Heart right ventricle (tissue), 16 donors: ENCODE measurements at regions of chr4 and their contacts with region 1.

Region 1: GRCh38 chr4:14254252-14254651 is 626.7 kb upstream of the BOD1L1 start:
- DNase-seq: peak; percentile 4 to 6
- ATAC-seq: peak in 1 of 8 donors; percentile 20
- H3K4me3 ChIP-seq: no peak overlapping the region
- H3K27ac ChIP-seq: no peak overlapping the region
- H3K4me1 ChIP-seq: no peaks in the 10 kb centered on the region
- H3K27me3 ChIP-seq: no peaks in the 10 kb centered on the region
- CTCF ChIP-seq: peak; percentile 16 to 58 (median 50)

Region 2: GRCh38 chr4:13907255-13907751 is 346.9 kb before region 1 on chr4:
- intact Hi-C with region 1: loop called in 1 of 10 experiments (anchors 10 kb)
- DNase-seq: no peak
- ATAC-seq: peak in 2 of 8 donors; percentile 35 to 45
- H3K4me3 ChIP-seq: no peak overlapping the region
- H3K27ac ChIP-seq: no peak overlapping the region
- H3K4me1 ChIP-seq: peaks cover 0 to 4% (median 0%) of the 10 kb centered on the region in 9 donors
- H3K27me3 ChIP-seq: no peaks in the 10 kb centered on the region
- CTCF ChIP-seq: peak in 2 of 9 donors; percentile 19 to 36